CD4-positive, alpha-beta memory T cell (primary cell): ENCODE measurements at regions of chr5 and their contacts with region 1.

Region 1: GRCh38 chr5:103139264-103139865 is 19.3 kb downstream of the PPIP5K2 start:
- DNase-seq: peak; percentile 76 to 80 (median 80)
- H3K4me3 ChIP-seq: no peak overlapping the region
- H3K4me3 Mint-ChIP-seq: no peak overlapping the region
- H3K27ac ChIP-seq: no peak overlapping the region
- H3K27ac Mint-ChIP-seq: peak overlapping the region in 2 of 7 donors; percentile 25 to 43
- H3K4me1 ChIP-seq: no peaks in the 10 kb centered on the region
- H3K4me1 Mint-ChIP-seq: peaks cover 2 to 6% (median 4%) of the 10 kb centered on the region in 4 donors
- H3K27me3 ChIP-seq: no peaks in the 10 kb centered on the region
- H3K27me3 Mint-ChIP-seq: no peaks in the 10 kb centered on the region

Region 2: GRCh38 chr5:102536323-102536928 is 602.9 kb before region 1 on chr5:
- CTCF ChIA-PET with region 1: interaction called, 5 read pairs
- POLR2A ChIA-PET with region 1: no interaction called
- intact Hi-C with region 1: loop called (anchors 1 kb)
- DNase-seq: peak in 2 of 5 donors; percentile 1 to 2
- H3K4me3 ChIP-seq: no peak overlapping the region
- H3K4me3 Mint-ChIP-seq: no peak overlapping the region
- H3K27ac ChIP-seq: no peak overlapping the region
- H3K27ac Mint-ChIP-seq: no peak overlapping the region
- H3K4me1 ChIP-seq: no peaks in the 10 kb centered on the region
- H3K4me1 Mint-ChIP-seq: no peaks in the 10 kb centered on the region
- H3K27me3 ChIP-seq: no peaks in the 10 kb centered on the region
- H3K27me3 Mint-ChIP-seq: peaks cover 0 to 1% of the 10 kb centered on the region in 2 donors

Region 3: GRCh38 chr5:102681407-102681983 is 457.9 kb before region 1 on chr5:
- CTCF ChIA-PET with region 1: interaction called, 52 read pairs
- POLR2A ChIA-PET with region 1: no interaction called
- intact Hi-C with region 1: loop called (anchors 1 kb)
- DNase-seq: peak; percentile 30 to 43 (median 34)
- H3K4me3 ChIP-seq: no peak overlapping the region
- H3K4me3 Mint-ChIP-seq: no peak overlapping the region
- H3K27ac ChIP-seq: no peak overlapping the region
- H3K27ac Mint-ChIP-seq: peak overlapping the region in 2 of 7 donors; percentile 2 to 21
- H3K4me1 ChIP-seq: no peaks in the 10 kb centered on the region
- H3K4me1 Mint-ChIP-seq: peaks cover 0 to 1% (median 0%) of the 10 kb centered on the region in 4 donors
- H3K27me3 ChIP-seq: no peaks in the 10 kb centered on the region
- H3K27me3 Mint-ChIP-seq: peaks cover 0 to 2% of the 10 kb centered on the region in 2 donors

Region 4: DNA sequence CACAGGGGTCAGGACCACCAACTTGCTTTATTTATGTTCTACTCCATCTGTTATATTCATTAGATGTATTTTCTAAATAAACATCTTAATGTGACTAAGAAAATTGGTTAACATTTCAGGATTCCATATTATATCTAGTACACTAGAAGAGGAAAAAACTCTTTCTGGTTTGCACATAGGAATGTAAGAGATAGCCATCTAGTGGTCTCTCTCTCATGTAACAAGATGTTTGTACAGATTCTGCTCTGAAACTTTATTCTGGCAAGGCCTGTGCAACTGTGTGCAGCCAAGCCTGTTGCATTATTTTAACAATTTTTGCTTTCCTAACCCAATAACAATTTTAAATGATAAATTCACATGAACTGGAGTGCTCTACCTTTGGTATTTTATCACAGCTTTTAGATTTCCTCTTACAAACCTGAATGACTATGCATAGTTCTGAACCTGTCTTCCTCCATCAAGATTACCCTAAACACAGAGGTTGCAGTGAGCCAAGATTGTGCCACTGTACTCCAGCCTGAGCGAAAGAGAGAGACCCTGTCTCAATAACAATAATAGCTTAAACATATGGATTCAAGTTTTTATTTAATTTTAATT is 167.6 kb before region 1 on chr5:
- CTCF ChIA-PET with region 1: interaction called, 13 read pairs
- POLR2A ChIA-PET with region 1: no interaction called
- intact Hi-C with region 1: loop called (anchors 10 kb)
- DNase-seq: no peak
- H3K4me3 ChIP-seq: no peak overlapping the region
- H3K4me3 Mint-ChIP-seq: no peak overlapping the region
- H3K27ac ChIP-seq: no peak overlapping the region
- H3K27ac Mint-ChIP-seq: no peak overlapping the region
- H3K4me1 ChIP-seq: no peaks in the 10 kb centered on the region
- H3K4me1 Mint-ChIP-seq: peaks cover 0 to 1% (median 0%) of the 10 kb centered on the region in 4 donors
- H3K27me3 ChIP-seq: no peaks in the 10 kb centered on the region
- H3K27me3 Mint-ChIP-seq: no peaks in the 10 kb centered on the region

Region 5: DNA sequence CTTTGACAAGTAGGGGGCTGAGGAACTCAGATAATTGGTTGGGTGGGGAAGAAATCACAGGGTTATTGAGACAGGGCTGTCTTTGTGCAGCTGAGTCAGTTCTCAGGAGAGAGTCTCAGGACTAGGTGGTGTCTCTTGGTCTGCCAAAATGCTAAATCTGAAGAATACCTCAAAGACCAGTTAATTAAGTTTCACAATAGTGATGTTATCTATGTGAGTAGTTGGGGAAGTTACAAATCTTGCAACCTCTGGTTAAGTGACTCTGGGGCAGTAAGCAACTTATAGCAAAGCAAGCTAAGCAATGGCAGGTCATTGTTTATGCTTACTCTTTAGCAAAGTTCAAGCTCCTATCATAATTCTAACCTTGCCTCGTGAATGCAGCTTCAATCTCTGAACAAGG is 73.0 kb before region 1 on chr5:
- CTCF ChIA-PET with region 1: interaction called, 13 read pairs
- POLR2A ChIA-PET with region 1: no interaction called
- intact Hi-C with region 1: loop called (anchors 2 kb)
- DNase-seq: no peak
- H3K4me3 ChIP-seq: no peak overlapping the region
- H3K4me3 Mint-ChIP-seq: no peak overlapping the region
- H3K27ac ChIP-seq: no peak overlapping the region
- H3K27ac Mint-ChIP-seq: no peak overlapping the region
- H3K4me1 ChIP-seq: no peaks in the 10 kb centered on the region
- H3K4me1 Mint-ChIP-seq: no peaks in the 10 kb centered on the region
- H3K27me3 ChIP-seq: no peaks in the 10 kb centered on the region
- H3K27me3 Mint-ChIP-seq: peaks cover 0 to 1% of the 10 kb centered on the region in 2 donors

Region 6: GRCh38 chr5:103218164-103218563 is 78.8 kb after region 1 on chr5:
- CTCF ChIA-PET with region 1: no interaction called
- POLR2A ChIA-PET with region 1: no interaction called
- intact Hi-C with region 1: no loop called
- DNase-seq: no peak
- H3K4me3 ChIP-seq: no peak overlapping the region
- H3K4me3 Mint-ChIP-seq: no peak overlapping the region
- H3K27ac ChIP-seq: no peak overlapping the region
- H3K27ac Mint-ChIP-seq: peak overlapping the region in 1 of 7 donors; percentile 69
- H3K4me1 ChIP-seq: no peaks in the 10 kb centered on the region
- H3K4me1 Mint-ChIP-seq: peaks cover 0 to 4% (median 3%) of the 10 kb centered on the region in 4 donors
- H3K27me3 ChIP-seq: no peaks in the 10 kb centered on the region
- H3K27me3 Mint-ChIP-seq: no peaks in the 10 kb centered on the region

Region 7: DNA sequence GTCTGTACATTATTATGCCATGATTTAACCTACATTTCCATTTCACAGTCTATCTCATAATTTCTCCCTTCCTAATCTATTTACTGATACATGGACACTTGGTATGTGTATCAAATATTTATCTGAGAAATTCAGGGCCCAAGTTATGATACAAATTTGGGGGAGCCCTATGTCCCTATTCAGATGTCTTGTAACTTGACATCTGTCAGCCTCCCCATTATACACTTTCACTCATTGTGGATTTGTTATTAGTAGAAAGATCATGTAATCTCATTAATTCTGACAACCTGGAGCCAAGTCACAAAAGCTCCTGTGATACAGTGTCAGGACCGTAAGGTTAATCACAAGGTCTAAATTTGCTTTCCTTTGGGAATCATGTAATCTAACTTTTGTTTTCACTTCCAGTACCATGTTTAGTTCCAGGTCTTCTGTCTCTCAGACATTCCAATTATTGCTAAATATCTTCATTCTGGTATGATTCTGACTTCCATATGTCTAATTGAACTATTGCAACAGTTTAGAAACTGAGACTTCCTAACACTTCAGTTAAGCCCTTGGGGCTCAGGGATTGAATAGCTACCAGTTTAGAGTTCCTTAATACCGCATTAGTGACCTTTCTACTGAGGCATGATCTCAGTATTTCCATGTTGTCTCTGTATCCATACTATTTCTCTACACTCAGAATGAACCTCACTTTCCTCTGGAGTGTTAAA is 606.1 kb after region 1 on chr5:
- CTCF ChIA-PET with region 1: no interaction called
- POLR2A ChIA-PET with region 1: no interaction called
- intact Hi-C with region 1: no loop called
- DNase-seq: no peak
- H3K4me3 ChIP-seq: no peak overlapping the region
- H3K4me3 Mint-ChIP-seq: no peak overlapping the region
- H3K27ac ChIP-seq: no peak overlapping the region
- H3K27ac Mint-ChIP-seq: no peak overlapping the region
- H3K4me1 ChIP-seq: no peaks in the 10 kb centered on the region
- H3K4me1 Mint-ChIP-seq: no peaks in the 10 kb centered on the region
- H3K27me3 ChIP-seq: no peaks in the 10 kb centered on the region
- H3K27me3 Mint-ChIP-seq: peaks cover 0 to 1% of the 10 kb centered on the region in 2 donors